Naive thymus-derived CD4-positive, alpha-beta T cell (primary cell): ENCODE measurements at regions of chr19 and their contacts with region 1.

Region 1: DNA sequence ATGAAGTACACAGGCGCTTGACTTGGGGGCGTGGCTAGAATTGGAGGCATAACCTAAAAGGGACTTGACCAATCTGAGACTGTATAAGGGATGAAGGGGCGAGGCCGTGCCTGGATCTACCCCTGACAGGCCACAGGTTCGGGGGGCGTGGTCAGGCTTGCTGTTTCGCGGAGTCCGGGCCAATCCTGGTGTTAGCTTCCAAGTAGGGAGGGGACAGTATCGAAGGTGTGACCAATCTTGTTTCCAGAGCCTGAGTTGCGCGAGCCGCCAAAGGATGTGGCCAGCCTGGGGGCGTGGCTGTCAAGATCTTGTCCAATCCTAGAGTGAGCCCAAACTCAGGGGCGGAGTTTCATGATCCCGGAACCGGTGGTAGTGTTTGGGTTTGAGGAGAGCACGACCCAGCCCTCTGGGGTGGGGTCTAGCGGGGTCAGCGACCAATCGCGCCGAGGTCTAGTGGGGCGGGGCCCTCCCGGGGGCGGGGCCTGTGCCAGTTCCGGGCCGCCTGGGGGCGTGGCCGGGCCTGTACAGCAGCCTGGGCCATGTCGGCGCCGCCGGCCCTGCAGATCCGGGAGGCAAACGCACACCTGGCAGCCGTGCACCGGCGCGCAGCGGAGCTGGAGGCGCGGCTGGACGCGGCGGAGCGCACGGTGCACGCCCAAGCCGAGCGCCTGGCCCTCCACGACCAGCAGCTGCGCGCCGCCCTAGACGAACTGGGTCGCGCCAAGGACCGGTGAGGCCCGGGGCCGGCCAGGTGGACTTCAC is at the start of gene VMAC:
- DNase-seq: peak in 8 of 9 donors; percentile 99 to 100 (median 100)
- ATAC-seq: peak; percentile 85
- H3K4me3 ChIP-seq: peak within 1 kb of the TSS; percentile 89
- H3K4me3 Mint-ChIP-seq: peak within 1 kb of the TSS; percentile 89 to 99 (median 96)
- H3K27ac ChIP-seq: peak within 1 kb of the TSS; percentile 93
- H3K27ac Mint-ChIP-seq: peak within 1 kb of the TSS; percentile 96 to 100 (median 100)
- H3K4me1 ChIP-seq: peaks cover 18 to 19% of the 10 kb centered on the region in 2 donors
- H3K4me1 Mint-ChIP-seq: peaks cover 21 to 53% (median 30%) of the 10 kb centered on the region in 7 donors
- H3K27me3 ChIP-seq: no peaks in the 10 kb centered on the region
- H3K27me3 Mint-ChIP-seq: no peaks in the 10 kb centered on the region
- total RNA-seq, gene VMAC: 13.1 to 39.4 (median 27.8) TPM

Region 2: DNA sequence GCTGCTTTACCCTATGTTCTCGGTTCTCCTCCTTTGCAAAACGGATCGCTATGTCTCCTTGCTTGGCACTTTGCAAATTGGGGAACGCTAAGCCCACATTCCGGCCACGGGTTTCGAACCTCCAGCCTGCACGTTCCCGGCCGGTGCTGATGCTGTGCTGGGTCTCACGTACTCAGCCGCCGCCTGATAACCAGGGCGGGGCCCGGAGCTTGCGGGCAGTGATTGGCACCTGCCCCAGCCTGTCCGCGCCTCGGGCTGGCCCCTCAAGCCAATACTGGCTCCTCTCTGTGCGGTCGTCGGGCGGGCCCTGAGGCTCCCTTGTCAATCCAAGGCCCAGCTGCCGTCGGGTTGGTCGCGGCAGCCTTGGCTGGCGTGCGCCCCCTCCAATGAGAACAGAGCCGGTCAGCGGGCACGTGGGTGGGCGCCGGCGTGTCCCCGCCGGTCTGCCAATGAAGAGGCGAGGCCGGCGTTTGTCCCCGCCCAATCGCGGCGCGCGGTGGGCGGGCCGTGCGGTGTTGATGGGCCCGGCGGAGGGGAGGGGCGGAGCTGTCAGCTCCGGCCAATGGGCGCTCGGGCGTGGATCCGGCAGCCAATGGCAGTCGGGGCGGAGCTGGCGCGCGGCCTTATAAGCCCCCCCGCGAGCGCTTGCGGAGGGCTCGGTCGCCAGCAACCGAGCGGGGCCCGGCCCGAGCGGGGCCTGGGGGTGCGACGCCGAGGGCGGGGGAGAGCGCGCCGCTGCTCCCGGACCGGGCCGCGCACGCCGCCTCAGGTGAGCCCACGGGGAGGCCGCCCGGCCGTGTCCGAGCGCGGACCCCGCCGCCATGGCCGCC is 935.9 kb before region 1 on chr19 and contains the start of gene KDM4B:
- CTCF ChIA-PET with region 1: no interaction called
- POLR2A ChIA-PET with region 1: no interaction called
- intact Hi-C with region 1: loop called in 1 of 2 experiments (anchors 5 kb)
- DNase-seq: peak; percentile 97 to 100 (median 99)
- ATAC-seq: peak; percentile 94
- H3K4me3 ChIP-seq: peak within 1 kb of the TSS; percentile 69
- H3K4me3 Mint-ChIP-seq: peak within 1 kb of the TSS; percentile 88 to 97 (median 94)
- H3K27ac ChIP-seq: peak within 1 kb of the TSS; percentile 67
- H3K27ac Mint-ChIP-seq: peak within 1 kb of the TSS; percentile 84 to 96 (median 91)
- H3K4me1 ChIP-seq: peaks cover 26 to 29% of the 10 kb centered on the region in 2 donors
- H3K4me1 Mint-ChIP-seq: peaks cover 26 to 40% (median 32%) of the 10 kb centered on the region in 7 donors
- H3K27me3 ChIP-seq: no peaks in the 10 kb centered on the region
- H3K27me3 Mint-ChIP-seq: no peaks in the 10 kb centered on the region
- total RNA-seq, gene KDM4B: 45.8 to 78.0 (median 65.8) TPM

Region 3: DNA sequence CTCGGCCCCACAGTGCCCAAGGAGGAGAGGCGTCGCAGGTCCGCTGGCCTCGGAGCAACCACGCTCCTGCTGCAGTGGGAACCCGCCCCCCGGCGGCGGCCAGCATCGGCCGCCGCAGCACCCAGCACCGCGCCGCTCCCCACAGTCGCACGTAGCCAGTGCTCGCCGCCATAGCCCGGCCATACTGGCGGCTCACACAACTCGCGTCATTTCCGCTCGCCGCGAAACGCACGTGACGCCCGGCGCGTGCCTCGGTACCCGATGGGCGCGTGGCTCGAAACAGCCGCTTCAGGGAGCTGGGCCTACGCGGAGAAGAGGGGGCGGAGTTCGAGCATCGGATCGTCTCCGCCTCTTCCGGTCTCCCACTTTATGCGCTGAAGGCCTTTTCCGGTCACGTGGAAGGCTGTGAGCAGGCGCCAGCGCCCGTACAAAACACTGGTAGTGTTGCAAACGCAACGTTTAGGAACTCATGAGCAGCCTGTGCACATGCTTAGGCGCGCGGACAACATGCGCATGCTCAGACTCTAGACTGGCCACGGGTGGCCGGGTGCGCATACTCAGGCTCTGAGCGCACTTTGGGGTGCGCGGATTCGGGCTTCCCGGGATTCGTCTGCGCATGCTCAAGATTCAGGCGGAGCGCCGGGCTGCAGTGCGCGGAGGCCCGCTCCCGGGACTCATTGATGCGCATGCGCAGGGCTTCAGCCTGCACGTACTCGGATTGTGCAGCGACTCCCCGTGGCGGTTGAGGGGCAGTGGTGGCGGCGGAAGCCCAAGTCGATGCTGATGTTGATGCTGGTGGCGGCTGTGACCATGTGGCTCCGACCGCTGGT is 184.4 kb before region 1 on chr19 and contains the starts of genes CATSPERD and LONP1:
- CTCF ChIA-PET with region 1: no interaction called
- POLR2A ChIA-PET with region 1: interaction called, 18 read pairs
- intact Hi-C with region 1: loop called (anchors 1 kb)
- DNase-seq: peak; percentile 96 to 100 (median 98)
- ATAC-seq: peak; percentile 95
- H3K4me3 ChIP-seq: peak within 1 kb of the TSS; percentile 86
- H3K4me3 Mint-ChIP-seq: peak within 1 kb of the TSS; percentile 87 to 96 (median 93)
- H3K27ac ChIP-seq: peak within 1 kb of the TSS; percentile 97
- H3K27ac Mint-ChIP-seq: peak within 1 kb of the TSS; percentile 94 to 98 (median 95)
- H3K4me1 ChIP-seq: peaks cover 12 to 16% of the 10 kb centered on the region in 2 donors
- H3K4me1 Mint-ChIP-seq: peaks cover 9 to 42% (median 29%) of the 10 kb centered on the region in 7 donors
- H3K27me3 ChIP-seq: no peaks in the 10 kb centered on the region
- H3K27me3 Mint-ChIP-seq: peaks cover 0 to 2% (median 0%) of the 10 kb centered on the region in 5 donors
- total RNA-seq, gene CATSPERD: 0.07 TPM in 1 of 5 experiments, not detected in the others
- total RNA-seq, gene LONP1: 62.8 to 102 (median 74.8) TPM

Region 4: GRCh38 chr19:5880604-5881078 is 23.9 kb before region 1 on chr19:
- CTCF ChIA-PET with region 1: no interaction called
- POLR2A ChIA-PET with region 1: no interaction called
- intact Hi-C with region 1: no loop called
- DNase-seq: no peak
- ATAC-seq: no peak
- H3K4me3 ChIP-seq: no peak overlapping the region
- H3K4me3 Mint-ChIP-seq: no peak overlapping the region
- H3K27ac ChIP-seq: no peak overlapping the region
- H3K27ac Mint-ChIP-seq: no peak overlapping the region
- H3K4me1 ChIP-seq: no peaks in the 10 kb centered on the region
- H3K4me1 Mint-ChIP-seq: no peaks in the 10 kb centered on the region
- H3K27me3 ChIP-seq: no peaks in the 10 kb centered on the region
- H3K27me3 Mint-ChIP-seq: peaks cover 8 to 29% (median 10%) of the 10 kb centered on the region in 5 donors

Region 5: GRCh38 chr19:5947435-5947834 is 42.9 kb after region 1 on chr19:
- CTCF ChIA-PET with region 1: interaction called, 5 read pairs
- POLR2A ChIA-PET with region 1: interaction called, 19 read pairs
- intact Hi-C with region 1: loop called (anchors 2 kb)
- DNase-seq: no peak
- ATAC-seq: peak; percentile 68
- H3K4me3 ChIP-seq: no peak overlapping the region
- H3K4me3 Mint-ChIP-seq: peak overlapping the region in 9 of 10 donors; percentile 16 to 82 (median 60)
- H3K27ac ChIP-seq: no peak overlapping the region
- H3K27ac Mint-ChIP-seq: peak overlapping the region in 7 of 9 donors; percentile 64 to 99 (median 89)
- H3K4me1 ChIP-seq: peaks cover 28 to 59% of the 10 kb centered on the region in 2 donors
- H3K4me1 Mint-ChIP-seq: peaks cover 57 to 88% (median 77%) of the 10 kb centered on the region in 7 donors
- H3K27me3 ChIP-seq: no peaks in the 10 kb centered on the region
- H3K27me3 Mint-ChIP-seq: no peaks in the 10 kb centered on the region

Region 6: GRCh38 chr19:5977785-5978605 is 73.5 kb after region 1 on chr19 and contains the start of gene RANBP3:
- CTCF ChIA-PET with region 1: no interaction called
- POLR2A ChIA-PET with region 1: interaction called, 9 read pairs
- intact Hi-C with region 1: loop called (anchors 1 kb)
- DNase-seq: peak; percentile 94 to 99 (median 99)
- ATAC-seq: peak; percentile 94
- H3K4me3 ChIP-seq: peak within 1 kb of the TSS; percentile 78
- H3K4me3 Mint-ChIP-seq: peak within 1 kb of the TSS; percentile 92 to 99 (median 96)
- H3K27ac ChIP-seq: peak within 1 kb of the TSS; percentile 94
- H3K27ac Mint-ChIP-seq: peak within 1 kb of the TSS; percentile 91 to 97 (median 95)
- H3K4me1 ChIP-seq: peaks cover 31 to 45% of the 10 kb centered on the region in 2 donors
- H3K4me1 Mint-ChIP-seq: peaks cover 42 to 65% (median 55%) of the 10 kb centered on the region in 7 donors
- H3K27me3 ChIP-seq: no peaks in the 10 kb centered on the region
- H3K27me3 Mint-ChIP-seq: peaks cover 0 to 2% (median 0%) of the 10 kb centered on the region in 5 donors
- total RNA-seq, gene RANBP3: 88.3 to 104 (median 94.0) TPM

Region 7: DNA sequence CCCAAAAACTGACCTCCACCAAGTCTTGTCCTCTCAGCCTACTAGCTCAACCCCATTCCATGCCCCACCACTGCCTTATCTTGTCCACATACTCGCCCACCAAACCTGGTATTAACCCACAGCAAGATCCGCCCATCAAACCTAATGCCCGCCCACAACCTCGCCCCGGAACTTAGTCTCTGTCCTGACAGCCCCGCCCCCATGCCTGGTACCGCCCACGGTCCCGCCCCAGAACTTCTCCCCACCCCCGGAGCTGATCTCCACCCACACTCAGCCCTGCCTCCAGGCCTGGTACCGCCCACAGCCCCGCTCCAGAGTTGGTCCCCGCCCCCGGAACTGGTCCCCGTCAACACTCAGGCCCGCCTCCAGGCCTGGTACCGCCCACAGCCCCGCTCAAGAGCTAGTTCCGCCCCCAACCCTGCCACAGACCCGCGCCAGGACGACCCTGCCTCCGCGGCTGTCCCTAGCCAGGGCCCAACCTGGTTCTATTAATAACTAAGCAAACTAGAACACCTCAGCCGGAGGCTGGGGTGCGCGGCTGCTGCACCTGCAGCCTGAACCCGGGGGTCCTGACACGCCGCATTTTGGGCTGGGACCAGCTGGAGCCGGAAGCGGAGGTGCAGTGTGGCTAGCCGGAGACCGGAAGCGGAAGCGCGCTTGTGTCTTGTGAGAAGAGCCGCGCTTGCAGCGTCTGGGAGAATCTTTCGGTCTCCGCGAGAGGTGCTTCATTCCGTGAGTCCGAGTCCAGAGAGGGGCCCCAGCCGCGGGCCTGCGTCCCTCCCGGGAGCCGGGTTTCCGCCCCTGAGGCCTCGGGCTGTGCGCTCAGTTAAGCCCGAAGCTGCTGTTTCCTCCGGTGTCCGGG is 1164.7 kb after region 1 on chr19 and contains the start of gene ZNF557:
- CTCF ChIA-PET with region 1: no interaction called
- POLR2A ChIA-PET with region 1: no interaction called
- intact Hi-C with region 1: loop called in 1 of 2 experiments (anchors 10 kb)
- DNase-seq: peak; percentile 93 to 100 (median 99)
- ATAC-seq: peak; percentile 99
- H3K4me3 ChIP-seq: peak within 1 kb of the TSS; percentile 100
- H3K4me3 Mint-ChIP-seq: peak within 1 kb of the TSS; percentile 90 to 98 (median 94)
- H3K27ac ChIP-seq: peak within 1 kb of the TSS; percentile 84
- H3K27ac Mint-ChIP-seq: peak within 1 kb of the TSS; percentile 63 to 95 (median 94)
- H3K4me1 ChIP-seq: peaks cover 14% of the 10 kb centered on the region in 2 donors
- H3K4me1 Mint-ChIP-seq: peaks cover 7 to 40% (median 19%) of the 10 kb centered on the region in 7 donors
- H3K27me3 ChIP-seq: no peaks in the 10 kb centered on the region
- H3K27me3 Mint-ChIP-seq: no peaks in the 10 kb centered on the region
- total RNA-seq, gene ZNF557: 11.7 to 36.2 (median 20.0) TPM